Caco-2 (cell line): ENCODE measurements at regions of chr19 and their contacts with region 1.

Region 1: DNA sequence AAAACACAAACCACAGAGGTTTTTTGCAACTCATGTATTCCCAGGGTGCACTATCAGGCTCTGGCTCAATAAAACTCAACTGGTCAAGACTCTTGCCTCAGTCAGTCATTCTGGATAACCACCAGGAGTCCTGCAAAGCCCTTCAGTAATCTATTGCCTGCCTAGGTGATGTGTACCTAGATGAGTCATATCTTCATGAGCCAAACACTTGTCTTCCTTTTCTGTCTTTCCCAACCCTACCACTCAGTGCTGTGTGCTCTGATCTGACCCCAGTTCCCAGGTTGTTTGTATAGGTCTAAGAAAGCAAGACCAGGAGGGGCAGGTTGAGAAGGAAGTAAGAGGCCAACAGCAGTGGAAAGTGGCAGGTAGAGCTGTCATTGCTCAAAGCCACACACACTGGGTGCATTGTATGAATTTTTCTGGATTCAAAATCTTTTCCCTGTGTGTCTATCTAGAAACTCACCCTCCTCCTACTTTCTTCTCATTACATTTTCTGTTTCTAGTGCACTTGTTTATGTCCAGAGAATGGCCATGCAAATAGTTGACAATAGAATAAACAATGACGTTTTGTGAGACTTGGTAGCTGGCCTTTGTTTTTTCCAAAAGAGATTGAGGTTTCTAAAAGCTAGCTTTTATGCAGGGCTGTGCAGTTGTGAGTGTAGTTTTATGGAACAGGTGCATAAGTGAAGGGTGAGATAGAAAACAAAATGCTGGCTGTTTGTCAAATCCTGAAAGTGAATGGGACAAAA is 48.1 kb downstream of the PSG1 start:
- DNase-seq: peak; percentile 71 to 81
- H3K4me3 ChIP-seq: no peak overlapping the region
- H3K4me3 Mint-ChIP-seq: peak overlapping the region; percentile 25
- H3K27ac Mint-ChIP-seq: peak overlapping the region; percentile 83
- H3K4me1 ChIP-seq: peaks cover 33% of the 10 kb centered on the region
- H3K4me1 Mint-ChIP-seq: peaks cover 24% of the 10 kb centered on the region
- H3K27me3 ChIP-seq: no peaks in the 10 kb centered on the region
- H3K27me3 Mint-ChIP-seq: no peaks in the 10 kb centered on the region
- CTCF ChIP-seq: peak; percentile 14 to 22

Region 2: GRCh38 chr19:42850981-42851717 is 19.7 kb after region 1 on chr19:
- CTCF ChIA-PET with region 1: no interaction called
- POLR2A ChIA-PET with region 1: no interaction called
- intact Hi-C with region 1: loop called (anchors 1 kb)
- DNase-seq: peak; percentile 52 to 65
- H3K4me3 ChIP-seq: no peak overlapping the region
- H3K4me3 Mint-ChIP-seq: no peak overlapping the region
- H3K27ac Mint-ChIP-seq: peak overlapping the region; percentile 78
- H3K4me1 ChIP-seq: peaks cover 23% of the 10 kb centered on the region
- H3K4me1 Mint-ChIP-seq: peaks cover 16% of the 10 kb centered on the region
- H3K27me3 ChIP-seq: no peaks in the 10 kb centered on the region
- H3K27me3 Mint-ChIP-seq: no peaks in the 10 kb centered on the region
- CTCF ChIP-seq: no peak

Region 3: DNA sequence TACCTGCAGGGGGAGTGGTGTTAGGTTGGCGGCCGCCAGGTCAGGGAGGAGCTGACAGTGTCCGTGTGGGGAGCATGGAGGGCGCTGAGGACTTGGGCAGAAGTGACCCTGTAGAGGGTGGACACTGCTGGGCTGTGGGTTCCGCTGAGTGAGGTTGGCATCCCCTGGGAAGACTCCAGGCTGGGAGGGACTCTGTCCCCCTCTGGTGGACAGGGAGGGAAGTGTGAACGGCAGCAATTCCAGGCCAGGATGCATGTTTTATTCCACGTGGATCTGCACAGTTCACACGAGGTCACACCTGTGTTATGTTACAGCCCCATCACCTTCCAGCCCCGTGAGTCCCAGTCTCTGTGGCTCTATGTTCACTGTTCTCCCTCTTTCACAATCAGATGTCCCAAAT is 49.8 kb after region 1 on chr19:
- CTCF ChIA-PET with region 1: no interaction called
- POLR2A ChIA-PET with region 1: no interaction called
- intact Hi-C with region 1: no loop called
- DNase-seq: no peak
- H3K4me3 ChIP-seq: no peak overlapping the region
- H3K4me3 Mint-ChIP-seq: no peak overlapping the region
- H3K27ac Mint-ChIP-seq: no peak overlapping the region
- H3K4me1 ChIP-seq: peaks cover 10% of the 10 kb centered on the region
- H3K4me1 Mint-ChIP-seq: peaks cover 10% of the 10 kb centered on the region
- H3K27me3 ChIP-seq: no peaks in the 10 kb centered on the region
- H3K27me3 Mint-ChIP-seq: no peaks in the 10 kb centered on the region
- CTCF ChIP-seq: peak; percentile 28 to 40